Ascending aorta (tissue), 2 donors: ENCODE measurements at regions of chr1 and their contacts with region 1.

Region 1: DNA sequence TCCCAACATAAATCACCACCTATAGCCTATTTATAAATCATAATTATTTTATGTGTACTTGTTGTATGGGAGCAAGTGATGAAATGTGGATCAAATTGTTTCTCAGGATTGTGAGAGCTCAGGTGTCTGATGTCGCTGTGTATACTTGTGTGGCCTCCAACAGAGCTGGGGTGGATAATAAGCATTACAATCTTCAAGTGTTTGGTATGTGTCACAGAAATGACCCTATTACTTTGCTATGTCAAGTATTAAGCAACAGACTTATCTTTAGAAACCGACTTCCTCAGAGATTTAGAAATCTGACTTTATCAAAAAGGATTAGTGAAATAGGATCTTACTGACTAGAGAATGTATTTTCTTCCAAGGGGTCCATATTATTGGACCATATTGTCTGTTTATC is 280.9 kb downstream of the TPR start:
- DNase-seq: no peak
- H3K4me3 ChIP-seq: no peak overlapping the region
- H3K27ac ChIP-seq: peak overlapping the region; percentile 39 to 72
- H3K4me1 ChIP-seq: peaks cover 0 to 20% of the 10 kb centered on the region in 2 donors
- H3K27me3 ChIP-seq: no peaks in the 10 kb centered on the region
- CTCF ChIP-seq: no peak

Region 2: GRCh38 chr1:185739967-185740366 is 354.2 kb before region 1 on chr1:
- intact Hi-C with region 1: loop called (anchors 5 kb)
- DNase-seq: no peak
- H3K4me3 ChIP-seq: no peak overlapping the region
- H3K27ac ChIP-seq: peak overlapping the region in 1 of 2 donors; percentile 3
- H3K4me1 ChIP-seq: peaks cover 0 to 20% of the 10 kb centered on the region in 2 donors
- H3K27me3 ChIP-seq: no peaks in the 10 kb centered on the region
- CTCF ChIP-seq: no peak

Region 3: DNA sequence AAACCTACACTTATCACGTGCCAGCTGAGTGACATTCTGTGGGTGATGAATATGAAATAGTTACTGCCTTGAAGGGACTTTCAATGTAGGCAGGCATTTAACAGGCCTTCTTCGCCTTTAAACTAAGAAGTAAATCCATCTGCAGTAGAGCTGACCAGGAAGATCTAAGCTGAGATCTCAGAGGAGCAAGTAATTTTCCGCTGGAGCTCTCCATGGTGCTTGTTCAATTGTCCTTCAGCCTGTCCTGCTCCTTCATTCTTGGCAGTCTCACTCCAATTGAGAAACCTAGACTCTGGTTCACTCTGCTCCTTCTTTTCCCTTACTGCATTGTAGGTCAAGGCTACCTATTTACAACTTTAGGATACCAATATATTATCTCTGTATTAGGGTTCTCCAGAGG is 176.5 kb before region 1 on chr1:
- intact Hi-C with region 1: no loop called
- DNase-seq: no peak
- H3K4me3 ChIP-seq: no peak overlapping the region
- H3K27ac ChIP-seq: no peak overlapping the region
- H3K4me1 ChIP-seq: peaks cover 0 to 10% of the 10 kb centered on the region in 2 donors
- H3K27me3 ChIP-seq: no peaks in the 10 kb centered on the region
- CTCF ChIP-seq: no peak